Panc1 (cell line): ENCODE measurements at regions of chr1 and their contacts with region 1.

Region 1: DNA sequence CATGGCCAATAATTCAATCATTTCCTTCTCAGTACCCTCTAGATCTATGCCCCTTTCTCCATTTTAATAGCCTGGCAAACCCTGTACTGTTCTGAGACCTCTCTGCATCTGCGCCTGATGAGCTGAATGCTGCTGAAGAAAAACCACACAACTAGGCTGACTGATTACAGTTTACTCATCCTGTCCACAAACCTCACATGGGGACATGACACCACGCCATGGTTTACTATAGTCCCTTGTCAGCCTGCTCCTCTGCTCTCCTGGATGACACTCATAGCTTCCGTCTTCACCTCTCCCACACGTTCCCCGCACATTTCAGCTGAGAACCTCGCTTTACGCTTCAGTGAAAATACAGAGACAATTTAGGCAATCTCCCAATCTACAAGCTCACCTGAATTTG is 59.7 kb downstream of the DESI2 start:
- DNase-seq: no peak
- ATAC-seq: no peak
- H3K4me3 ChIP-seq: no peak overlapping the region
- H3K27ac ChIP-seq: no peak overlapping the region
- H3K4me1 ChIP-seq: no peaks in the 10 kb centered on the region
- H3K27me3 ChIP-seq: no peaks in the 10 kb centered on the region
- CTCF ChIP-seq: no peak

Region 2: GRCh38 chr1:244674446-244674845 is 38.2 kb before region 1 on chr1:
- CTCF ChIA-PET with region 1: no interaction called
- POLR2A ChIA-PET with region 1: interaction called, 19 read pairs
- in situ Hi-C with region 1: no loop called
- intact Hi-C with region 1: no loop called
- DNase-seq: no peak
- ATAC-seq: no peak
- H3K4me3 ChIP-seq: no peak overlapping the region
- H3K27ac ChIP-seq: no peak overlapping the region
- H3K4me1 ChIP-seq: no peaks in the 10 kb centered on the region
- H3K27me3 ChIP-seq: no peaks in the 10 kb centered on the region
- CTCF ChIP-seq: no peak